HCT116 (cell line): ENCODE measurements at regions of chr2 and their contacts with region 1.

Region 1: DNA sequence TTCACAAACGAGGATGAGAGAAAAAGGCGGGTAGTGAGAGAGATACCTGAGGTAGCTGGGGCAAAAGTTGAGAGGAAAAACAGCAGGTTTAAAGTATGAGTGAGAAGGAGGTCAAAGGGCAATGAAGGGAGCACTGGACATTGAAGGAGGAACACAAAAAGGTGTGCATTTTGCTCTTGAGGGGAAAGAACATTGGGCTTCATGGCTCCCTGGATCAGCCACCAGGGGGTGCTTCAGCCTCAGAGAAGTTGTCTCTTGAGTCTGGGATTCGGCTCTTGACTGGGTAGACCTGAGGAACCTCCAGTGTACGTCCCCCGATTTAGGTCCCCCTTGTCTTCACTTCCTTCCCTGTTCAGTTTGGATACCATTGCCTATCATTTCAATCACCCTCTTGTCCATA is 128.5 kb downstream of the RAPGEF4 start:
- DNase-seq: peak; percentile 8
- ATAC-seq: peak; percentile 75
- H3K4me3 ChIP-seq: no peak overlapping the region
- H3K27ac ChIP-seq: no peak overlapping the region
- H3K4me1 ChIP-seq: no peaks in the 10 kb centered on the region
- H3K27me3 ChIP-seq: no peaks in the 10 kb centered on the region
- CTCF ChIP-seq: peak; percentile 34 to 78 (median 64); a peak in 5 of 6 replicates
- POLR2A ChIP-seq: no peak
- RAD21 ChIP-seq: peak; percentile 61

Region 2: DNA sequence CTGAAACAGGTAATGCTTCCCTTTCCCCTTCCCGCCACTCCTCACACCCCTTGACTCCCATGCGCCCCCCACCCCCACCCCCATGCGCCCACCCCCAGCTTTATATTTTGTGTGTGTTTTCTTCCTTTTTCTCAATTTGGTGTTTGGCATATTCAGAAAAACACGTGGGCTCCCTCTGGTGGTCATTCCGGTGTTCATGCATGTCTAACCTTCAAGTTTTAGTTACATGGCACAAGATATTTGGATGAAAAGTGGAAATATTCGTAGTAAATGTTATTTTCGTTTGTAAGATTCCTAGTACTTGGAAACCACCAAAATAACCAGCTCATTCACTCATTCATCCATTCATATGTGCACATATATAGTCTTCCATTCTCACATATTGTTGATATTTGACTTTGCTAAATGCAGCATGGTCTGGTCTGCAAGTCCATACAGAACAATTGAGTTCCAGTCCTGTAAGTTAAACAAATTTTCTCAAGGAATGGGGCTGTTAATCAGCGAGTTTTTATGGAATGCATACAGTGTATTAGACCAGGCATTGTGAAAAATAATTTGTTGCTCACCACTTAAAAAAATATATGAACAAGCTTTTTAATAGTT is 67.8 kb after region 1 on chr2:
- CTCF ChIA-PET with region 1: interaction called, 19 read pairs
- POLR2A ChIA-PET with region 1: no interaction called
- RAD21 ChIA-PET with region 1: interaction called in 1 of 2 experiments, 4 read pairs
- intact Hi-C with region 1: loop called (anchors 1 kb)
- DNase-seq: peak; percentile 52
- ATAC-seq: peak; percentile 82
- H3K4me3 ChIP-seq: no peak overlapping the region
- H3K27ac ChIP-seq: no peak overlapping the region
- H3K4me1 ChIP-seq: peaks cover 2 to 6% of the 10 kb centered on the region in 2 experiments; a peak in 3 of 4 replicates
- H3K27me3 ChIP-seq: no peaks in the 10 kb centered on the region
- CTCF ChIP-seq: peak; percentile 68 to 73 (median 72); a peak in 5 of 6 replicates
- POLR2A ChIP-seq: no peak
- RAD21 ChIP-seq: peak; percentile 68

Region 3: DNA sequence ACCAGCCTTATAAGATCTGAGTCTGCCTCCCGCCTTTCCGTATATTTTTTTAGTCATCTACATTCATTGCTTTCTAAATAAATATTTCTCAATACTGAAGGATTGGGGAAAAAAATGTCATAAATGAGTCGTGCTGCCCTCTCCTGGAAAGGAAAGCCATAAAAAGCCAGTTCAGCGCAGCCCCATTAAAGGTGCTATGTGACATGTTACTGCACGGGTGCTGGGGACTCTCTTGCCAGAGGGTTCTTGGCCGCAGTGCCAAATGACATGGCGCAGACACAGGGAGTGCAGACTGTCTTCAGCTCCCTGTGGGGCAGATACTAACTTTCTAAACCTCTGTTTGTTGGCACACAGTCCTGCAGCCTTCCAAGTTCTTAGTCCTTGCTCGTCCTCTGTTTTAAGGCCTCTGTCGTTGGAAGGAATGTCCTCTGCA is 157.8 kb after region 1 on chr2:
- CTCF ChIA-PET with region 1: no interaction called
- POLR2A ChIA-PET with region 1: no interaction called
- RAD21 ChIA-PET with region 1: no interaction called
- intact Hi-C with region 1: loop called (anchors 2 kb)
- DNase-seq: no peak
- ATAC-seq: peak; percentile 82
- H3K4me3 ChIP-seq: no peak overlapping the region
- H3K27ac ChIP-seq: no peak overlapping the region
- H3K4me1 ChIP-seq: no peaks in the 10 kb centered on the region
- H3K27me3 ChIP-seq: no peaks in the 10 kb centered on the region
- CTCF ChIP-seq: peak; percentile 30 to 58 (median 54); a peak in 3 of 6 replicates
- POLR2A ChIP-seq: no peak
- RAD21 ChIP-seq: peak; percentile 56; the same call in 1 of the 2 replicates